GM13977 (cell line): ENCODE measurements at regions of chr6 and their contacts with region 1.

Region 1: GRCh38 chr6:52664186-52664990 is 6.5 kb upstream of the TMEM14A start:
- DNase-seq: peak; percentile 96
- CTCF ChIP-seq: no peak

Region 2: DNA sequence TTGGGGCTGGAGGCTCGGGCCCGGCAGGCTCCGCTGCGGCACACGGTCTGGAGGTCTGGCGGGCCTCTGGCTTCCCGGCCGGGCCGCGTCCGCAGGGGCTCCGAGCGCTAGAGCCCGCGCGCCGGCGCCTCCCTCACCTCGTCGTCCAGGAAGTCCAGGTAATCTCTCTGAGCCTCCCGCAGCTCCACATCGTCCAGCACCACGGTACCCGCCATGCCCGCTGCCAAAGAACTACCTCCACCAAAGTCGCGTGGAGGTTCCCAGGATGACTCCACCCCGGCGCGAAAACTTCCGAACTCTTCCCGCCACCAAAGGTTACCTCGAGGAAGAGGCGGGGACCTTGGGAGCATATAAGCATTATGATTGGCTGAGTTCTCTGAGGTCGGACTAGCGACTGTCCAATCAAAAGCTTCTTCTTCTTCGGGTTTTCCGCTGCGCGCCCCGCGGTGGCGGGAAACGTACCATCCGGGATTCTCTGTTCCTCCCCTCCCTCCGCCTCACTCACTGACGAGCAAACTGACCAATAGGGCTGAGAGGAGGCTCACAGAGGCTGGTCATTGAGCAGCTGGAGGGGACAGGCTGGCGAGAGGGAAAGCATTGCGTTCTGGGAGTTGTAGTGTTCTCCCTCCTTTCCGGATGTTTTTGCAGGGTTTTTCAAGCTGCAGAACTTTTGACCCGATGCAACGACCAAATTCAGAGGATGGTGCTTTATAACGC is 379.8 kb before region 1 on chr6 and contains the start of gene MCM3:
- in situ Hi-C with region 1: loop called (anchors 25 kb)
- DNase-seq: peak; percentile 96
- CTCF ChIP-seq: no peak